Activated naive CD4-positive, alpha-beta T cell treated with anti-CD3 and anti-CD28 coated beads for 36 hours (primary cell): ENCODE measurements at regions of chr12 and their contacts with region 1.

Region 1: GRCh38 chr12:15220994-15221885 is at the start of gene RERG:
- DNase-seq: peak; percentile 76
- H3K4me3 Mint-ChIP-seq: peak within 1 kb of the TSS; percentile 62
- H3K27ac Mint-ChIP-seq: no peak within 1 kb of the TSS
- H3K4me1 Mint-ChIP-seq: peaks cover 3% of the 10 kb centered on the region
- H3K27me3 Mint-ChIP-seq: peaks cover 13% of the 10 kb centered on the region
- total RNA-seq, gene RERG: not detected

Region 2: DNA sequence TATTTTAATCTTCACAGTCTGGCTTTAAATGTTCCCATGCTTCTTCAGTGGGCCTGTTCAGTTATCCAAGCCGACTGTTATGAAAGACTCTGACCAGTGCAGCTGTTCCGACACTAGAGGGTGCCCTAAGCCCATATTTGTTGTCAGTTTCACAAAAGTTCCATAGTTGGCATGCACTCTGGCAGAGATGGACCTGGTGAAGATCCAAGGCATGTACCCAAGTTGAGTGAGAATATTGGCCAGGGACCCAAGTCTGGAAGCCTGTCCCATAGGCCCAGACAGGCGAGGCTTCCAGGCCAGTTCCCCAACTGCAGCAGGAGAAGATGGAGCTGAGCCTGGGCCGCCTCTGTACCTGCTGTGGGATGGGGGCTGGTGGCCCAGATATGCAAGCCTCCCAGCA is 497.5 kb before region 1 on chr12:
- CTCF ChIA-PET with region 1: interaction called, 6 read pairs
- intact Hi-C with region 1: loop called (anchors 1 kb)
- DNase-seq: peak; percentile 74
- H3K4me3 Mint-ChIP-seq: no peak overlapping the region
- H3K27ac Mint-ChIP-seq: no peak overlapping the region
- H3K4me1 Mint-ChIP-seq: no peaks in the 10 kb centered on the region
- H3K27me3 Mint-ChIP-seq: no peaks in the 10 kb centered on the region

Region 3: DNA sequence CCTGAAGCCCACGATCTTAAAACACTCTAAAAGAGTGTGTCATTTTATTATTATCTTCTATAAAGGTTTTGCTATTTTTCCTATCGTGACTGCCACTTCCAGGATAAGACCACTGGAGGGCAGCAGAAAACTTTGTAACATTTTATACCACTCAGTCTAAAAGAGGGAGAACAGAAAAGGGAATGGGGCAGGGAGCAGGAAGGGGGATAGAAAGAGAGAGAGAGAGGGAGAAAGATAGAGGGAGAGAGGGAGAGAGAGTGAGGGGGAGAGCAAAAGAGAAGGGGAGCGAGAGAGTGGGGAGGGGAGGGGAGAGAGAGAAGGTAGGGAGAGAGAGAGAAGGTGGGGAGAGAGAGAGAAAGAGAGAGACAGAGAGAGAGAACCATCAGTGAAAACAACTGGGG is 375.9 kb before region 1 on chr12:
- CTCF ChIA-PET with region 1: interaction called, 16 read pairs
- intact Hi-C with region 1: loop called (anchors 1 kb)
- DNase-seq: peak; percentile 63
- H3K4me3 Mint-ChIP-seq: no peak overlapping the region
- H3K27ac Mint-ChIP-seq: no peak overlapping the region
- H3K4me1 Mint-ChIP-seq: peaks cover 9% of the 10 kb centered on the region
- H3K27me3 Mint-ChIP-seq: no peaks in the 10 kb centered on the region

Region 4: GRCh38 chr12:15131431-15131830 is 89.8 kb before region 1 on chr12:
- CTCF ChIA-PET with region 1: no interaction called
- intact Hi-C with region 1: no loop called
- DNase-seq: no peak
- H3K4me3 Mint-ChIP-seq: no peak overlapping the region
- H3K27ac Mint-ChIP-seq: no peak overlapping the region
- H3K4me1 Mint-ChIP-seq: no peaks in the 10 kb centered on the region
- H3K27me3 Mint-ChIP-seq: peaks cover 7% of the 10 kb centered on the region

Region 5: GRCh38 chr12:15151161-15152120 is 69.8 kb before region 1 on chr12:
- CTCF ChIA-PET with region 1: interaction called, 24 read pairs
- intact Hi-C with region 1: loop called (anchors 1 kb)
- DNase-seq: no peak
- H3K4me3 Mint-ChIP-seq: no peak overlapping the region
- H3K27ac Mint-ChIP-seq: no peak overlapping the region
- H3K4me1 Mint-ChIP-seq: no peaks in the 10 kb centered on the region
- H3K27me3 Mint-ChIP-seq: peaks cover 8% of the 10 kb centered on the region

Region 6: GRCh38 chr12:15201056-15201455 is 20.2 kb before region 1 on chr12:
- CTCF ChIA-PET with region 1: interaction called, 18 read pairs
- intact Hi-C with region 1: no loop called
- DNase-seq: no peak
- H3K4me3 Mint-ChIP-seq: no peak overlapping the region
- H3K27ac Mint-ChIP-seq: no peak overlapping the region
- H3K4me1 Mint-ChIP-seq: no peaks in the 10 kb centered on the region
- H3K27me3 Mint-ChIP-seq: no peaks in the 10 kb centered on the region

Region 7: GRCh38 chr12:15453613-15454012 is 232.4 kb after region 1 on chr12:
- CTCF ChIA-PET with region 1: no interaction called
- intact Hi-C with region 1: no loop called
- DNase-seq: no peak
- H3K4me3 Mint-ChIP-seq: no peak overlapping the region
- H3K27ac Mint-ChIP-seq: no peak overlapping the region
- H3K4me1 Mint-ChIP-seq: no peaks in the 10 kb centered on the region
- H3K27me3 Mint-ChIP-seq: peaks cover 2% of the 10 kb centered on the region